ENCODE measurements at regions of chr2 and their contacts with region 1.

Region 1: GRCh38 chr2:13006829-13007717 is 290.3 kb downstream of the TRIB2 start:
- DNase-seq: peak; percentile 52 to 82
- ATAC-seq: peak in 2 of 3 donors; percentile 62 to 83
- H3K4me3 ChIP-seq: no peak overlapping the region
- H3K4me3 Mint-ChIP-seq: no peak overlapping the region
- H3K27ac ChIP-seq: no peak overlapping the region
- H3K27ac Mint-ChIP-seq: no peak overlapping the region
- H3K4me1 ChIP-seq: peaks cover 3% of the 10 kb centered on the region
- H3K4me1 Mint-ChIP-seq: peaks cover 5 to 7% of the 10 kb centered on the region in 2 donors
- H3K27me3 ChIP-seq: no peaks in the 10 kb centered on the region
- H3K27me3 Mint-ChIP-seq: no peaks in the 10 kb centered on the region
- CTCF ChIP-seq: peak; percentile 93

Region 2: GRCh38 chr2:11477994-11478393 is 1529.1 kb before region 1 on chr2:
- intact Hi-C with region 1: loop called (anchors 5 kb)
- DNase-seq: peak; percentile 68 to 89
- ATAC-seq: peak; percentile 72 to 81 (median 81)
- H3K4me3 ChIP-seq: no peak overlapping the region
- H3K4me3 Mint-ChIP-seq: no peak overlapping the region
- H3K27ac ChIP-seq: no peak overlapping the region
- H3K27ac Mint-ChIP-seq: no peak overlapping the region
- H3K4me1 ChIP-seq: peaks cover 1% of the 10 kb centered on the region
- H3K4me1 Mint-ChIP-seq: peaks cover 0 to 2% of the 10 kb centered on the region in 2 donors
- H3K27me3 ChIP-seq: peaks cover 17% of the 10 kb centered on the region
- H3K27me3 Mint-ChIP-seq: peaks cover 22 to 34% of the 10 kb centered on the region in 2 donors
- CTCF ChIP-seq: peak; percentile 93

Region 3: DNA sequence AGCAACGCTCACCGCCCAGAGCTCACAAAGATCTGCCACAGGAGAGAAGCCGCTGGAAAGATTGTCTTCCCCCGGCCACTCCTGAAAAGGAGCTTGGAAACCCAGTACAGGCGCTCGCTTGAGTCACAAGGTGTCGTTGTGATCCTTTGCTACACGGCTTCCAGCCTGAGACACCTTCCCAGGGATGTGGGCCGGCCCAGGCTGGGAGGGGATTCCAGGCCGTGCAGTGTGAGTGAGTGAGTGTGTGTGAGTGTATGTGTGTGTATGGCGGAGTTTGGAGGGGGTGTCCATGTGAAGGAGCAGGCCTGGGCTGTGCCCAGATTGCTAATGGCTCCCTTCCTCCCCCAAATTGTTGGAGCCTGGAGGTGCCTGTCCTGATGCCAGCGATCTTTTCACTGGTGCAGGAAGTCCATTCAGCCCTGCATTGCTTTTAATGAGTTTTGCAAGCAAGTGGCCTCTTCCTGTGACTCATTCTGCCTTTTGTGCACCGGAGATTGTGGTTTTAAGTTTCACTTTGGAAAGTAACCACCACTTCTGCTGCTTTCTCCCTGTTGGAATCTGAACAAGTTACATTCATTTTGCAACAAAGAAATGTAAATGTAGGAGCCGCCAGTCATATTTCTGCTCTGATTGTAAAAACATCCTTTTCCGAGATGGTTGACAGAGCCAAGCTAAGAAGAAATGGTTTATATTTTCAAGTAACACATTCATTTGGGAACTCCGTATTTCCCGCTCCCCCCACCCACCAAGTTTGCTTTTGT is 1176.9 kb before region 1 on chr2:
- intact Hi-C with region 1: loop called (anchors 1 kb)
- DNase-seq: peak; percentile 26 to 74
- ATAC-seq: peak; percentile 75 to 81 (median 77)
- H3K4me3 ChIP-seq: peak overlapping the region; percentile 1
- H3K4me3 Mint-ChIP-seq: peak overlapping the region; percentile 88
- H3K27ac ChIP-seq: no peak overlapping the region
- H3K27ac Mint-ChIP-seq: peak overlapping the region; percentile 57 to 84
- H3K4me1 ChIP-seq: peaks cover 39% of the 10 kb centered on the region
- H3K4me1 Mint-ChIP-seq: peaks cover 48 to 49% of the 10 kb centered on the region in 2 donors
- H3K27me3 ChIP-seq: no peaks in the 10 kb centered on the region
- H3K27me3 Mint-ChIP-seq: no peaks in the 10 kb centered on the region
- CTCF ChIP-seq: no peak

Region 4: GRCh38 chr2:11863513-11864328 is 1143.4 kb before region 1 on chr2:
- intact Hi-C with region 1: loop called (anchors 1 kb)
- DNase-seq: peak; percentile 52 to 86
- ATAC-seq: peak; percentile 83 to 95 (median 94)
- H3K4me3 ChIP-seq: no peak overlapping the region
- H3K4me3 Mint-ChIP-seq: peak overlapping the region; percentile 71
- H3K27ac ChIP-seq: no peak overlapping the region
- H3K27ac Mint-ChIP-seq: peak overlapping the region in 1 of 2 donors; percentile 60
- H3K4me1 ChIP-seq: peaks cover 12% of the 10 kb centered on the region
- H3K4me1 Mint-ChIP-seq: peaks cover 6 to 15% of the 10 kb centered on the region in 2 donors
- H3K27me3 ChIP-seq: no peaks in the 10 kb centered on the region
- H3K27me3 Mint-ChIP-seq: peaks cover 7 to 11% of the 10 kb centered on the region in 2 donors
- CTCF ChIP-seq: peak; percentile 94

Region 5: DNA sequence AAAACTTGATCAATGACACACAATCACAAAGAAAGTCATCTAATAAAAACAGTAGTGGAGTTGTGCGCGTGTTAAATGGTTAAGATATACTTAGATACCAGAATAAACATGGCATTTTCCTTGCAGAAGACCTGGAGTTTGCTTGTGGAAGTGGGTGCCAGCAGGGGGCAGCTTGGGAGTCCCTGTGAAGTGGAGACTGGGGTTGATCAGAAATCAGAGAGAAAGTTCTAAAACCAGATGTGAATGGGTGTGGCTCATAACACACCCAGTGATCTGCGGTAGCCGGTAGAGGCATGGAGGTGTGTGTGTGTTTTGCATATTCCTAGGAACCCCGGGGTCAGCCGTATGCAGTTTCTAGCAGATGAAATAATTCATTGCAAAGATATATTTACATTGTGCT is 590.5 kb before region 1 on chr2:
- intact Hi-C with region 1: loop called (anchors 5 kb)
- DNase-seq: peak; percentile 36 to 80
- ATAC-seq: peak; percentile 48 to 73 (median 59)
- H3K4me3 ChIP-seq: no peak overlapping the region
- H3K4me3 Mint-ChIP-seq: peak overlapping the region; percentile 47
- H3K27ac ChIP-seq: no peak overlapping the region
- H3K27ac Mint-ChIP-seq: peak overlapping the region in 1 of 2 donors; percentile 8
- H3K4me1 ChIP-seq: peaks cover 7% of the 10 kb centered on the region
- H3K4me1 Mint-ChIP-seq: peaks cover 29 to 40% of the 10 kb centered on the region in 2 donors
- H3K27me3 ChIP-seq: no peaks in the 10 kb centered on the region
- H3K27me3 Mint-ChIP-seq: no peaks in the 10 kb centered on the region
- CTCF ChIP-seq: peak; percentile 65

Region 6: GRCh38 chr2:12897181-12897580 is 109.9 kb before region 1 on chr2:
- intact Hi-C with region 1: no loop called
- DNase-seq: peak in 1 of 2 donors; percentile 24
- ATAC-seq: peak in 2 of 3 donors; percentile 42 to 66
- H3K4me3 ChIP-seq: no peak overlapping the region
- H3K4me3 Mint-ChIP-seq: peak overlapping the region; percentile 40
- H3K27ac ChIP-seq: no peak overlapping the region
- H3K27ac Mint-ChIP-seq: peak overlapping the region; percentile 72 to 78
- H3K4me1 ChIP-seq: peaks cover 4% of the 10 kb centered on the region
- H3K4me1 Mint-ChIP-seq: peaks cover 16 to 17% of the 10 kb centered on the region in 2 donors
- H3K27me3 ChIP-seq: no peaks in the 10 kb centered on the region
- H3K27me3 Mint-ChIP-seq: no peaks in the 10 kb centered on the region
- CTCF ChIP-seq: no peak

Region 7: DNA sequence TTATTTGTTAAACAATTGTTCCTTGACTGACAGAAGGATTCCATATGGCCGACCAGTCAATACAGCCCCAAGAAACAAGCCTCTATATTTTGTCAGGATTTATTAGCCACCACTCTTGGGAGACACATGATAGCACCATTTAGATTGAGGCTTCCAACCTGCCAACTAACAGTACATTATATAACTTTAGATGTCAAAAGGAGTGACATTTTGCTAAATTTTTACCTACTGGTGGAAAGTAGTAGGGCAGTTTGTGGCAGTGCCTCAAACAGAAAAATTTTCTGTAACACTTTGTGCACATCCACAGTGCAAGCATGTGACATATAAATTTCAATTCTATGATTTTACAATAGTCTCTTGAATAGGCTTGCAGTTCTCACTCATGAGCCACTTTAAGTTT is 173.7 kb after region 1 on chr2:
- intact Hi-C with region 1: no loop called
- DNase-seq: no peak
- ATAC-seq: no peak
- H3K4me3 ChIP-seq: no peak overlapping the region
- H3K4me3 Mint-ChIP-seq: no peak overlapping the region
- H3K27ac ChIP-seq: no peak overlapping the region
- H3K27ac Mint-ChIP-seq: no peak overlapping the region
- H3K4me1 ChIP-seq: no peaks in the 10 kb centered on the region
- H3K4me1 Mint-ChIP-seq: no peaks in the 10 kb centered on the region
- H3K27me3 ChIP-seq: no peaks in the 10 kb centered on the region
- H3K27me3 Mint-ChIP-seq: peaks cover 5 to 6% of the 10 kb centered on the region in 2 donors
- CTCF ChIP-seq: no peak